GM13976 (cell line): ENCODE measurements at regions of chrX and their contacts with region 1.

Region 1: GRCh38 chrX:37846934-37847732 is at the start of gene DYNLT3:
- DNase-seq: peak; percentile 86
- CTCF ChIP-seq: no peak

Region 2: DNA sequence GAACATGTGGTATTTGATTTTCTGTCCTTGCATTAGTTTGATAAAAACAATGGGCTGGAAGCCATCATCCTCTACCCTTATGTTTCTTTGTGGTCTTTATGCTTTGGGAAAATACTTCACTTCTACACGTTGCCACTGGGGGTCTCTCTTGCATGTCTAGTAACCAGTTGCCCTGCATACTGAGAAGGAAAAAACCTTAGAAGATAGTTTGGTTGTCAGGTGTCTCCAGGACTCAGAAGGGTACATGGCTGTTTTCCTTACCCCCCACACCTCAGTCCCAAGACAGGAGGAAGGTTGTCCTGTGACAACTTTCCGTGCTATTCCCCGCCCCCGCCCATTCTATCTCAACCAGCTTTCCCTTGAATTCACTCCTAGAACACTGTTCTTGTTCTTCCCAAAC is 337.8 kb before region 1 on chrX:
- in situ Hi-C with region 1: loop called (anchors 25 kb)
- DNase-seq: no peak
- CTCF ChIP-seq: no peak

Region 3: DNA sequence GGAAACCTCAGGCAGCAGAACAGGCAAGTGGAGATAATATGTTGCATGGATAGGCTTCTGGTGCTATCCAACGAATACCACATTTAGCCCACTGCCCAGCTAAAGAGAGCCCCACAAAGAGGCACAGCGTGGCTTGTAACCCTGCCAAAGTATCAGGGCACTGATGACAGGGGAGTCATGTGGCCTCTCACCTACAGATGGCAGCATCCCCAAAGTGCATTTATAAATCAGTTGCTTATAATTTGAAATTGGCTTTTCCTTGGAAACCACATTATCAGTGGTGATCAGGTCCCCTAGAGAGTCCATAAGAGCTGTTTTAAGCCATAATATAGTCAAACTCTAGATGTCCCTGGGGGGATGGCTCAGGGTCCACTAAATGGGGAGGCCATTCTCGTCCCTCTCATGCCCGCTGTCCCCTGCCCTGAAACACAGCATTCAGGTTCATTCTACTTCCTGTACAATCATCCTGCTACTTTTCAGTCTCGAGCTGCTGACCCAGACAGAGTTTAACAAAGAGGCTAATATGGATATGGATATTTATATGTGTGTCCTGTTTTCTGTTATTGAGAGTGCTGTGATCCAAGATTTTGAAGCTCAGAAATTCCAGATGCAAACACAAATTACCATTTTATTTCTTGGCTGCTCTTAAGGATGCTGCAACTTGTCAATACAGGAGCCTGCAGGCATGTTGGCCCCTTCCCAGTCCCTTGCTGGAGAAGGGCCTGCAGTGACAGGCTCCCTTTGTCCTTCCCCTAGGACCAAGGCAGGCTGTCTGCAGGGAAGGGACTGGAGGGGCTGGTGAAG is 345.1 kb after region 1 on chrX:
- in situ Hi-C with region 1: no loop called
- DNase-seq: no peak
- CTCF ChIP-seq: peak; percentile 28